Mammary epithelial cell (primary cell): ENCODE measurements at regions of chrX and their contacts with region 1.

Region 1: DNA sequence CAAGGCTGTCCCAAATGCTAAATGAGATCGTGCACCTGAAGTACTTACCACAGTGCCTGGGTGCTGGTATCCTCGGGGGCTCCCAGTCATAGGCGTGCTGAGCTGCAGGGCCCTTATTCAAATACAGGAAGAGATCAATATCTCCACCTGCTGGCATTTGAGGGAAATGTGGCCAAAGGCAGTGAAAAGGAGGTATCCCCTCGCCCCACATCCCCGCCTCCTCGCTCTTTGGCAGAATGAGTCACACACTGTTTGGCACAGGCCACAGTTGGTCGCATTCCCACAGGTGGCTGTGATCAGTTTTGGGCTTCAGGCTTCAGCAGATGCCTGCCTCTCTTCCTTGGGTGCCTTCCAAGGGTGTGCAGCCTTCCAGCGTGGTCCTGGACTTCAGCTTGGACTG is 28.4 kb downstream of the ZNF185 start:
- DNase-seq: peak; percentile 68
- H3K4me3 ChIP-seq: no peak overlapping the region
- H3K27ac ChIP-seq: no peak overlapping the region
- H3K4me1 ChIP-seq: peaks cover 3% of the 10 kb centered on the region
- H3K27me3 ChIP-seq: no peaks in the 10 kb centered on the region
- CTCF ChIP-seq: peak; percentile 52 to 58

Region 2: DNA sequence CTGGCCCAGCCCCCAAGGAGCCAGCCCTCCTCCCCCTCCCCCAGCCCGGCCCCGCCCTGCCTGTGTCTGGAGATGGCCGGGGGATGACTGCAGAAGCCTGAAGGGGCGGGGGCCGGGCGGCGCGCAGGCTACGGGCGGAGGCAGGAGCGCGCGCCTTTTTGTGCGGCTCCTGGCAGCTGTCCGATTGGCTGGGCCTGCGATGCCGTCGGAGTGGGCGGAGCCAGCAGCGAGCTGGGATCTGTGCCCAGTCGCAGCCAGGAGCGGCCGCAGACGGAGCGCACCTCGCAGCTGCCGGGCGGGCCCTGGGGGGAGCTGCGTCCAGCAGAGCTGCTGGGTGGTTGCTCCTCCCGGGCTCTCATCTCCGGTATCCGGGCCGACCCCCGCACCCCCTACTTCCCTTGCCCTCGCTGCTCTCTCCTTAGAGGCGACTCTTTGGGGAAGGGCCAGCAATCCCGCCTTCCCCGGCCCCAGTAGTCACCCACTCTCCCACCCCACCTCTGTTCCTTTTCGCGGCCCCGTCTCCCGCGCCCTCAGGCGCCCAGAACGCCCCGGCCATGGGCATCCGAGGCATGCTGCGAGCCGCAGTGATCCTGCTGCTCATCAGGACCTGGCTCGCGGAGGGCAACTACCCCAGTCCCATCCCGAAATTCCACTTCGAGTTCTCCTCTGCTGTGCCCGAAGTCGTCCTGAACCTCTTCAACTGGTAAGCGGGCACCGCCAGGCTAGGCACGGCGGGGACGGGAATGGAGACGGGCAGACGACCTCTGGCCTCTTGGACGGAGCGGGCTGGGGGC is 288.4 kb before region 1 on chrX and contains the start of gene GABRQ:
- CTCF ChIA-PET with region 1: interaction called, 5 read pairs
- dilution Hi-C with region 1: no loop called
- in situ Hi-C with region 1: no loop called
- intact Hi-C with region 1: loop called (anchors 1 kb)
- DNase-seq: no peak
- H3K4me3 ChIP-seq: no peak within 1 kb of the TSS
- H3K27ac ChIP-seq: no peak within 1 kb of the TSS
- H3K4me1 ChIP-seq: no peaks in the 10 kb centered on the region
- H3K27me3 ChIP-seq: peaks cover 8% of the 10 kb centered on the region
- CTCF ChIP-seq: no peak
- total RNA-seq, gene GABRQ: not detected

Region 3: GRCh38 chrX:152878976-152879755 is 47.1 kb before region 1 on chrX:
- CTCF ChIA-PET with region 1: no interaction called
- dilution Hi-C with region 1: no loop called
- in situ Hi-C with region 1: no loop called
- intact Hi-C with region 1: loop called (anchors 1 kb)
- DNase-seq: peak; percentile 87
- H3K4me3 ChIP-seq: no peak overlapping the region
- H3K27ac ChIP-seq: peak overlapping the region; percentile 71
- H3K4me1 ChIP-seq: peaks cover 30% of the 10 kb centered on the region
- H3K27me3 ChIP-seq: no peaks in the 10 kb centered on the region
- CTCF ChIP-seq: peak in 1 of 2 donors; percentile 36

Region 4: GRCh38 chrX:152904151-152905080 is 21.9 kb before region 1 on chrX:
- CTCF ChIA-PET with region 1: no interaction called
- dilution Hi-C with region 1: no loop called
- in situ Hi-C with region 1: no loop called
- intact Hi-C with region 1: loop called (anchors 1 kb)
- DNase-seq: peak; percentile 17
- H3K4me3 ChIP-seq: no peak overlapping the region
- H3K27ac ChIP-seq: no peak overlapping the region
- H3K4me1 ChIP-seq: peaks cover 14% of the 10 kb centered on the region
- H3K27me3 ChIP-seq: no peaks in the 10 kb centered on the region
- CTCF ChIP-seq: peak; percentile 67 to 68